ENCODE measurements at regions of chr4 and their contacts with region 1.

Region 1: DNA sequence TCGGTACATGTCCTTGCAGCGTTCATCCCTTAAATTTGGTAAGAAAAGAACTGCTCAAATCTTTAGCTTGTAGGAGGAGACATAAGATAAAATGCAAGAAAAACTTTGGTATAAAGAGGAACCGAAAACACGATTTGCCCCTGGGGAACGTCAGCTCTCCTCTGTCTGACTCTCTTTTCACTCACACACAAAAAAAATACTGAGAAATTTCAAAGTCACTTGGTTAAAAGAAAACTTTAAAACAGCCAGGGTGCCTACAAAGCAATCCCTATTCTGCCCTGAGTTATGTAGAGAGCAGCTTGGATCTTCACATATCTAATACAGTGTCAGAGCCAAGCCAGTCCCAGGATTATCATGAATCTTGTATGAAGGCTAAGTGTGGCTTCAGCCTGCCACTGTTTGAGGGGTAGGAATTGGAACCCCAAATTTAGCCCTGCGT is 248.5 kb upstream of the CXXC4 start:
- DNase-seq: no peak

Region 2: DNA sequence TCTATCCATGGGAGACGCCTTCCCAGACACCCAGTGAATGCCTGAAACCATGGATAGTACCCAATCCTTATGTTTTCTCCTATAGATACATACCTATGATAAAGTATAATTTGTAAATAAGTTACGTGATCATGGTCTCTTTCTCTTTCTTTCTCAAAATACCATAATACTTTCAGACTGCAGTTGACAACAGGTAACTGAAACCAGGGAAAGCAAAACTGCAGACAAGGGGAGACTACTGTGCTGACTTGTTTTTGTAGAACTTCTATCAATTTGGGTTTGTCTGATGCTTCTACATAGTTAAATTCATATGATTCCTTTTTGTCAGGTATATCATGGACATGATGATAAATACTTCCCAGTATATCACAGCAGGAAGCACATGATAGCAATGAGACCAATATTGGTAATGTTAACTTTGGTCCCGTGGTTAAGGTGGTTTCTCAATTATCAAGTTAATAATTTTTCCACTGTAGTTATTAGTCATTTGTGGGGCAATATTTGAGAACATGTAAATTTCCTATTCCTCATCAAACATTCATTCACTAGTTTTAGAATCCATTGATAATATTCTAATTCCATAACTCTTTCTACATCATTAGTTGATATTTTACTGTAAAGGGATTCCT is 105.5 kb after region 1 on chr4:
- intact Hi-C with region 1: loop called (anchors 10 kb)
- DNase-seq: no peak

Region 3: GRCh38 chr4:104976262-104976661 is 233.0 kb after region 1 on chr4:
- intact Hi-C with region 1: no loop called
- DNase-seq: no peak